CD4-positive, alpha-beta T cell (primary cell): ENCODE measurements at regions of chr10 and their contacts with region 1.

Region 1: DNA sequence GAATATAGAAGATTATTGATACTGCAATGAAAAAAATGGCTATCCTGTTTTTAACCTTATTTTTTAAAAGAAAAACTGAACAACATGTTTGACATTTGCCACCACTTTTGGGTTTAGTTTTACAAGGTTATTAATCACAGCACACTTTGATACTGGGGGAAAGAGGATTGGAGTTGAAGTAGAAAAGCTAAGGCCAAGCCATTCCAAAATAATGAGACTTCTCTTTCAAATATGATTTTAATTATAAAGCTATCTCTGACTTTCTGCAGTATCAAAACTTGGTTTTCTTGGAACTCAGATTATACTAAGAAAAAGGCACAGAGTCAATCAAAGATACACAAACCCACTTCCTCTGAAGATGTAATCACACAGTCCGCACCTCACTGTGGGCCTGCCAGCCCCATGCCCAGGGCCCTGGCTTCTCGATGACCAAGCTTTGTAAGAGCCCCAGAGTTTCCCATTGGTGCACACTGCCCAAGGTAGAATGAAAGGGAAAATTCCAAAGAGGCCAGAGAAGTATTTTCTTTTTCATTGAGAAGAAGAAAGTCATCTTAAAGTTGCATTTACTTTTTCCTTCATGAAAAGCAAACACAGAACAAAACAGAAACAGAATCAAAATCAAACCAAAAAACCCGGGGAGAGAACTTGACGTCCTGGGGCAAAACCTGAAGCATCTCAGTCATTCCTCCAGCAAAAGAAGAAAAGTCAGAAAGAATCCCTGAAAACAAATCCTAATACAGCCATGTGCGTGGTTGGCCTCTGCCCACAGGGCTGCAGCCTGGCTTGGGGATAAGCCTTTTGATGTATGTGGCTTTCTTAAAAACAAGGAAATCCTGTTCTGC is 187.7 kb upstream of the KLF6 start:
- DNase-seq: peak in 6 of 14 experiments; percentile 14 to 76 (median 54)
- ATAC-seq: peak; percentile 69
- H3K4me3 ChIP-seq: peak overlapping the region; percentile 0
- H3K4me3 Mint-ChIP-seq: peak overlapping the region; percentile 85
- H3K27ac ChIP-seq: peak overlapping the region; percentile 33 to 46
- H3K27ac Mint-ChIP-seq: peak overlapping the region; percentile 90
- H3K4me1 ChIP-seq: peaks cover 74% of the 10 kb centered on the region
- H3K4me1 Mint-ChIP-seq: peaks cover 54% of the 10 kb centered on the region
- H3K27me3 ChIP-seq: no peaks in the 10 kb centered on the region
- H3K27me3 Mint-ChIP-seq: no peaks in the 10 kb centered on the region
- CTCF ChIP-seq: no peak

Region 2: GRCh38 chr10:3486345-3487065 is 486.2 kb before region 1 on chr10:
- CTCF ChIA-PET with region 1: no interaction called
- POLR2A ChIA-PET with region 1: no interaction called
- intact Hi-C with region 1: no loop called
- DNase-seq: no peak
- ATAC-seq: no peak
- H3K4me3 ChIP-seq: no peak overlapping the region
- H3K4me3 Mint-ChIP-seq: no peak overlapping the region
- H3K27ac ChIP-seq: no peak overlapping the region
- H3K27ac Mint-ChIP-seq: no peak overlapping the region
- H3K4me1 ChIP-seq: peaks cover 22% of the 10 kb centered on the region
- H3K4me1 Mint-ChIP-seq: peaks cover 16% of the 10 kb centered on the region
- H3K27me3 ChIP-seq: no peaks in the 10 kb centered on the region
- H3K27me3 Mint-ChIP-seq: no peaks in the 10 kb centered on the region
- CTCF ChIP-seq: no peak

Region 3: DNA sequence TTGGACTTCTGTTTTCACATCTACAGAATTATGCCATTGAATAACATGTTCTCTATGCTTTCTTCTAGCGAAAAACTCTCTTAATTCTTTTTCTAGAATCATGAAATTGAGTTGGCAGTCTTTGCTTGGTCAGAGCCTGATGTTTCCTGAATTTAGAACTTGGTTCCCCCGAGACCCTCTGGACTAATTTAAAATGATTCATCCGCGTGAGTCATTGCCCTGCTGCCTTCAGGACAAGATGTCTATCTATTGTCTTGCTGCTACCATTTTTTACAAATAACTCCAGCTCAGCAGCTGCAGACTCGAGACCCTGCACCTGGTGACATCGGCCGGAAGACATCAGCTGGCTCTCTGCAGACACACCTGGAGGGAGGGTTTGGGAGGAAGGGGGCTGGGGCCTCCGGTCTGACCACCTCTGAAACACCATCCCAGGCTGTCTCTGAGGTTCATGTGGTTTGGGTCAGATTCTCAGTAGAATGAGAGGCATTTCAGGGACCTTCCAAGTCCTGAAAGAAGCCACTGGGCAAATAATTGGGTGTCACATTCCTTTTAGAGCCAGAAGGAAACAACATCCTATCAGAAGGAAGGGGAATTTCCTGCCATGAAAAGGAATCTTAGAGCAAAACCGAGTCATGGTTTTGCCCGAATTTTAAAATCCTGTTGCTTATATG is 166.8 kb before region 1 on chr10:
- CTCF ChIA-PET with region 1: no interaction called
- POLR2A ChIA-PET with region 1: interaction called, 3 read pairs
- intact Hi-C with region 1: loop called in 1 of 2 experiments (anchors 10 kb)
- DNase-seq: peak in 11 of 14 experiments; percentile 38 to 85 (median 57)
- ATAC-seq: peak; percentile 2
- H3K4me3 ChIP-seq: peak overlapping the region; percentile 1
- H3K4me3 Mint-ChIP-seq: peak overlapping the region; percentile 66
- H3K27ac ChIP-seq: peak overlapping the region; percentile 97 to 98
- H3K27ac Mint-ChIP-seq: no peak overlapping the region
- H3K4me1 ChIP-seq: peaks cover 90% of the 10 kb centered on the region
- H3K4me1 Mint-ChIP-seq: peaks cover 14% of the 10 kb centered on the region
- H3K27me3 ChIP-seq: no peaks in the 10 kb centered on the region
- H3K27me3 Mint-ChIP-seq: no peaks in the 10 kb centered on the region
- CTCF ChIP-seq: no peak

Region 4: DNA sequence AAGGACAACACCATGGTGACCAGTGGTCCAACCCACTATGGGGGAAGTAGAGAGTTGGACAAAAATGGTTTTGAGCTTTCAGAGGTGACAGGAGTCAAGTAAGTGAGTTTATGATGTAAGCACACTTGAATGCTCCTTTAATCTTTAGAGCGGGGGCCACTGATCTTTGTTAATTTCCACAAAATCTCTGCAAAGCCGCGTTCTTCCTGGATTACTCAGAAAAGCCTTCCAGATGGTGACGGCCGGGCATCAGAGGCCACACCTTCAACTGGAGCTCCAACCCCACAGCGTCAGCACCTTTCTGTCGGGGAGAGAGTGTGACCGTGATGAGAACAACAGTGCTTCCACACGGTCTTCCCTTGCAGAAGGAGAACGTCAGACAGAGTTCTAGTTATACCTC is 152.4 kb before region 1 on chr10:
- CTCF ChIA-PET with region 1: no interaction called
- POLR2A ChIA-PET with region 1: no interaction called
- intact Hi-C with region 1: no loop called
- DNase-seq: no peak
- ATAC-seq: no peak
- H3K4me3 ChIP-seq: no peak overlapping the region
- H3K4me3 Mint-ChIP-seq: no peak overlapping the region
- H3K27ac ChIP-seq: no peak overlapping the region
- H3K27ac Mint-ChIP-seq: no peak overlapping the region
- H3K4me1 ChIP-seq: peaks cover 2% of the 10 kb centered on the region
- H3K4me1 Mint-ChIP-seq: peaks cover 4% of the 10 kb centered on the region
- H3K27me3 ChIP-seq: no peaks in the 10 kb centered on the region
- H3K27me3 Mint-ChIP-seq: no peaks in the 10 kb centered on the region
- CTCF ChIP-seq: no peak

Region 5: GRCh38 chr10:3961082-3961481 is 11.6 kb before region 1 on chr10:
- CTCF ChIA-PET with region 1: interaction called, 4 read pairs
- POLR2A ChIA-PET with region 1: interaction called, 17 read pairs
- intact Hi-C with region 1: no loop called
- DNase-seq: peak in 11 of 14 experiments; percentile 19 to 89 (median 37)
- ATAC-seq: peak; percentile 96
- H3K4me3 ChIP-seq: no peak overlapping the region
- H3K4me3 Mint-ChIP-seq: peak overlapping the region; percentile 31
- H3K27ac ChIP-seq: no peak overlapping the region
- H3K27ac Mint-ChIP-seq: peak overlapping the region; percentile 55
- H3K4me1 ChIP-seq: peaks cover 35% of the 10 kb centered on the region
- H3K4me1 Mint-ChIP-seq: peaks cover 21% of the 10 kb centered on the region
- H3K27me3 ChIP-seq: no peaks in the 10 kb centered on the region
- H3K27me3 Mint-ChIP-seq: no peaks in the 10 kb centered on the region
- CTCF ChIP-seq: no peak